ENCODE measurements at regions of chr4 and their contacts with region 1.

Region 1: GRCh38 chr4:162163852-162164759 is at the start of gene FSTL5:
- DNase-seq: peak; percentile 66
- H3K4me3 Mint-ChIP-seq: peak within 1 kb of the TSS; percentile 59
- H3K27ac Mint-ChIP-seq: no peak within 1 kb of the TSS
- H3K4me1 Mint-ChIP-seq: peaks cover 2% of the 10 kb centered on the region
- H3K27me3 Mint-ChIP-seq: peaks cover 12% of the 10 kb centered on the region
- total RNA-seq, gene FSTL5: not detected

Region 2: GRCh38 chr4:161252520-161253141 is 911.5 kb before region 1 on chr4:
- CTCF ChIA-PET with region 1: no interaction called
- intact Hi-C with region 1: loop called (anchors 10 kb)
- DNase-seq: peak; percentile 13
- H3K4me3 Mint-ChIP-seq: no peak overlapping the region
- H3K27ac Mint-ChIP-seq: no peak overlapping the region
- H3K4me1 Mint-ChIP-seq: no peaks in the 10 kb centered on the region
- H3K27me3 Mint-ChIP-seq: no peaks in the 10 kb centered on the region

Region 3: GRCh38 chr4:162090628-162091027 is 73.5 kb before region 1 on chr4:
- CTCF ChIA-PET with region 1: no interaction called
- intact Hi-C with region 1: no loop called
- DNase-seq: no peak
- H3K4me3 Mint-ChIP-seq: no peak overlapping the region
- H3K27ac Mint-ChIP-seq: no peak overlapping the region
- H3K4me1 Mint-ChIP-seq: no peaks in the 10 kb centered on the region
- H3K27me3 Mint-ChIP-seq: no peaks in the 10 kb centered on the region

Region 4: GRCh38 chr4:162742406-162742805 is 578.3 kb after region 1 on chr4:
- CTCF ChIA-PET with region 1: no interaction called
- intact Hi-C with region 1: no loop called
- DNase-seq: no peak
- H3K4me3 Mint-ChIP-seq: no peak overlapping the region
- H3K27ac Mint-ChIP-seq: no peak overlapping the region
- H3K4me1 Mint-ChIP-seq: no peaks in the 10 kb centered on the region
- H3K27me3 Mint-ChIP-seq: no peaks in the 10 kb centered on the region